CD4-positive, alpha-beta memory T cell (primary cell): ENCODE measurements at regions of chr17 and their contacts with region 1.

Region 1: DNA sequence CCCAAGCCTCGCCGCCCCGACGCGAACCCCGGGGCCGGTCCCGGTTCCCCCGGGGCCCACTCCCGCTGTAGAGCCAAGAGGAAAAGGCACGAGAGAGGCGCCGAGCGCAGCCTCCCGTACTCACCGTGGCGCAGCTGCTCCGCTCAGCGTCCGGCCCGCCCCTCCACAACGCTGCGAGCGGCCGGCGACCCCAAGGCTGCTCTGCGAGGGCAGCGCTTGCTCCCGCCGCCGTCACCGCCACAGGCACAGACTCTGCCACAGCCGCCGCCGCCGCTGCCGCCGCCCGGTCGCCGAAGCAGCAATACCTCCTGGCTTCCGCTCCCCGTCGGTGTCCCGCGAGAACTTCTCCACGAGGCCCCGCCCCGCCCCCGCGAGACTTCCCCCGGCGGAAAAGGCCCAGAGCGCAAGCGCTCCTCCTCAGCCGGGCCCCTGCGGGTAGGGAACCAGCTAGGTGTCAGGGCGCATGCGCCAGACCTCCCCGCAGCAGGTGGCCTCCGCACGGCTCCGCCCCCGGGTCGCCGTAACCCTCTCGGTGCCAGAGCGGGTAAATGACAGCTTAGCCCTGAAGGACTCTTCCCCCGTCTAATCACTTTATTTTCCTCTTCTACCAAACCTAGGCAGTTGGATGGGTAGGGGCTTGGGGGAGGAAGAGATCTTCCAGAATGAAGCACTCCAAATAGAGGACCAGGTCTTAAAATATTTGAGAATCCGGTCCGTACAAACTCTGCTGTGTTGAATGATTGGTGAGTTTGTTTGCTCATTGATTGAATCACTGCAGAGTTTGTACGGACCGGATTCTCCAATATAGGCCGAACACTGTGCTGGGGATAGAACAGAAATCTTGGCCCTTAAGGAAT is at the start of gene GRB2:
- DNase-seq: peak; percentile 99 to 100 (median 100)
- H3K4me3 ChIP-seq: peak within 1 kb of the TSS; percentile 88 to 92
- H3K4me3 Mint-ChIP-seq: peak within 1 kb of the TSS; percentile 96 to 99 (median 97)
- H3K27ac ChIP-seq: peak within 1 kb of the TSS; percentile 89
- H3K27ac Mint-ChIP-seq: peak within 1 kb of the TSS; percentile 91 to 99 (median 96)
- H3K4me1 ChIP-seq: peaks cover 43% of the 10 kb centered on the region
- H3K4me1 Mint-ChIP-seq: peaks cover 25 to 54% (median 37%) of the 10 kb centered on the region in 4 donors
- H3K27me3 ChIP-seq: no peaks in the 10 kb centered on the region
- H3K27me3 Mint-ChIP-seq: no peaks in the 10 kb centered on the region
- total RNA-seq, gene GRB2: 131 to 133 TPM

Region 2: DNA sequence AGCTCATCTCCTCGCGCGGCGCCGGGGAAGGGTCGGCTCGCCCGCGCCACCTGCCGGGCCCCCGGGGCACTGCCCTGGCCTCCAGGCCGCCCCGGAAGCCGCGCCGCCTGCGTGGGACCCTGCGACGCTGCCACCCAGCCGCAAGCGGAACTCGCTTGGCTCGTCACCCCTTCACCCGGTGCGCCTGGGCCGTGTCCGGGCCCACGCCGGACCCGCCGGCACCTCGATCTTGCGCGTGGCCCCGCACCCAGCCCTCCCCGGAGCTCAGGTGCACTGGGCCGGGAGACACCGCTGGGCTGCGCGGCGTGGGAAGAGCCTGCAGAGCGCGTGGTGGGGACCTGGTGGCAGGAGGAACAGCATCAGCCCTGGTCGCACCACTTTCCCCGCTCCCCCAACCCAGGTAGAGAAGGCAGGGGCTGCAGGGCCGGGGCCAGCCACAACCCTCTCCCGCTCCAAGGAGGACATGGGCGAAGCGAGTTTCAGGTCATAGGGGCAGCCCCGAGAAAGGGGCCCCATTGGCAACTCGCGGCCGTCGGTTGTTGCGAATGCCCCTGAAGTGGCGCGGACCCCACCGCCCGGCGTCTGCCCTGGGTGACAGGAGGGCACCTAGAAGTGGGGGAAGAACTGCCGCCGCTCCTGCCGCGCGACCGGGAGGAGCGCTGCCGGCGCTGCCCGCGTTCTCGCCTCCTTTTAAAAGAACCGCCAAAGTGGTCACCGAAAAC is 134.2 kb before region 1 on chr17:
- CTCF ChIA-PET with region 1: interaction called, 3 read pairs
- POLR2A ChIA-PET with region 1: interaction called, 16 read pairs
- intact Hi-C with region 1: no loop called
- DNase-seq: peak; percentile 86 to 94 (median 88)
- H3K4me3 ChIP-seq: peak overlapping the region; percentile 42 to 82
- H3K4me3 Mint-ChIP-seq: peak overlapping the region; percentile 80 to 91 (median 84)
- H3K27ac ChIP-seq: peak overlapping the region; percentile 89
- H3K27ac Mint-ChIP-seq: peak overlapping the region; percentile 25 to 94 (median 88)
- H3K4me1 ChIP-seq: peaks cover 27% of the 10 kb centered on the region
- H3K4me1 Mint-ChIP-seq: peaks cover 10 to 35% (median 22%) of the 10 kb centered on the region in 4 donors
- H3K27me3 ChIP-seq: no peaks in the 10 kb centered on the region
- H3K27me3 Mint-ChIP-seq: no peaks in the 10 kb centered on the region

Region 3: DNA sequence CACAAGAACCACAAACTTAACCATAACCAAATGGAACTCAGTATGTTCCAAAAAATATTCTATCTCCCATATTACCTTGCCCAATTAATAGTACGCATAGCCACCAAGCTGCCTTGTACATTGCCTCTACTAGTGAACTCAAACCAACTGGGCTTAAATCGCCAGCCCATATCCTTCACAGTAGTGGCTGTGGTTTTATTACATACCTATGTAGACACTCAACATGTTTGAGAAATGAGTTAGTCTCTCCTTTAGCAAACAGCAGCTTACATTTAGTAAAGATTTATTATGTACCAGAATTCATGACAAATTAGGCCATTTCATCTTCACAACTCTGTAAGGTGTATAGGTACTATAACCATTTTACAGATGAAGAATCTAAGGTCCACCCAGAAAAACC is 41.5 kb before region 1 on chr17:
- CTCF ChIA-PET with region 1: interaction called, 3 read pairs
- POLR2A ChIA-PET with region 1: interaction called, 3 read pairs
- intact Hi-C with region 1: loop called (anchors 5 kb)
- DNase-seq: no peak
- H3K4me3 ChIP-seq: no peak overlapping the region
- H3K4me3 Mint-ChIP-seq: peak overlapping the region in 5 of 8 donors; percentile 2 to 69 (median 10)
- H3K27ac ChIP-seq: no peak overlapping the region
- H3K27ac Mint-ChIP-seq: peak overlapping the region in 4 of 7 donors; percentile 9 to 76 (median 18)
- H3K4me1 ChIP-seq: peaks cover 92% of the 10 kb centered on the region
- H3K4me1 Mint-ChIP-seq: peaks cover 69 to 96% (median 86%) of the 10 kb centered on the region in 4 donors
- H3K27me3 ChIP-seq: no peaks in the 10 kb centered on the region
- H3K27me3 Mint-ChIP-seq: no peaks in the 10 kb centered on the region

Region 4: GRCh38 chr17:75450270-75450669 is 44.7 kb after region 1 on chr17:
- CTCF ChIA-PET with region 1: no interaction called
- POLR2A ChIA-PET with region 1: no interaction called
- intact Hi-C with region 1: no loop called
- DNase-seq: no peak
- H3K4me3 ChIP-seq: no peak overlapping the region
- H3K4me3 Mint-ChIP-seq: no peak overlapping the region
- H3K27ac ChIP-seq: no peak overlapping the region
- H3K27ac Mint-ChIP-seq: peak overlapping the region in 1 of 7 donors; percentile 73
- H3K4me1 ChIP-seq: no peaks in the 10 kb centered on the region
- H3K4me1 Mint-ChIP-seq: peaks cover 0 to 1% (median 0%) of the 10 kb centered on the region in 4 donors
- H3K27me3 ChIP-seq: no peaks in the 10 kb centered on the region
- H3K27me3 Mint-ChIP-seq: no peaks in the 10 kb centered on the region

Region 5: DNA sequence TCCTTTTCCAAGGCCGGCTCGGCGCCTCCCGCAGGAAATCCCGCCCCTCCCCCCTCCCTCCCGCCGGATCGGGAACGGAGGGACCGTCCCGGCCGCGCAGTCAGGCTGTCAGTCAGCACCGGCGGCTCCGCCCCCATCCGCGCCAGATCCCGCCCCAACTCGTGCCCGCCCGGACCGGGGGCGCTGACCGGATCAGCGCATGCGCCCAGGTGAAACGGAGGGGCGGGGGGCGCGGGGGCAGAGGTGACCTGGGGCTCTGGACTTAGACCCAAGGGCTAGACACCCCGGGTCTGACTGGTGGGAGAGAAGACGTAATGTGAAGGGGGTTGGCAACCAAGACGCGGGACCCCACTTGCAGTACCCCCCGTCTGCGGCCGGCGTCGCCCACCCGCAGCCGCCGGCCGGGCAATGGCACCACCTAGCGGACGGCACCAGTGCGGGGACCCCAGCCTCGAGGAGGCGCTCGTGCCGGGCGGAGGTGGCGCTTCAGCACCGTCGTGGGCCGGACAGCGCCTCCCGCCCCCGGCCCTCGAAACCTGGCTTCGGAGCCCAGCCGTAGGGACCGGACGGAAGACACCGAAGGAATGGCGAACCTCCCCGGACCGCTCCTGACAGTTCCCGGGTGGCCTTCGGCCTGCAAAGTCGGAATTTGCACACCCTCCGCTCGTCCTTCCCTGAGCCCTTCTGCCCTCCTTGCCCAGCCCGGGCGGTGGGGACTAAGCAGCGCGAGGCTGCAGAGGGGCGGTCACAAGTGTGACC is 110.1 kb after region 1 on chr17 and contains the start of gene CASKIN2:
- CTCF ChIA-PET with region 1: interaction called, 6 read pairs
- POLR2A ChIA-PET with region 1: interaction called, 21 read pairs
- intact Hi-C with region 1: loop called (anchors 1 kb)
- DNase-seq: peak; percentile 68 to 74 (median 70)
- H3K4me3 ChIP-seq: peak within 1 kb of the TSS; percentile 69 to 74
- H3K4me3 Mint-ChIP-seq: peak within 1 kb of the TSS; percentile 70 to 84 (median 80)
- H3K27ac ChIP-seq: no peak within 1 kb of the TSS
- H3K27ac Mint-ChIP-seq: peak within 1 kb of the TSS in 6 of 7 donors; percentile 19 to 75 (median 52)
- H3K4me1 ChIP-seq: peaks cover 29% of the 10 kb centered on the region
- H3K4me1 Mint-ChIP-seq: peaks cover 16 to 31% (median 19%) of the 10 kb centered on the region in 4 donors
- H3K27me3 ChIP-seq: no peaks in the 10 kb centered on the region
- H3K27me3 Mint-ChIP-seq: no peaks in the 10 kb centered on the region
- total RNA-seq, gene CASKIN2: 0.32 to 0.53 TPM

Region 6: DNA sequence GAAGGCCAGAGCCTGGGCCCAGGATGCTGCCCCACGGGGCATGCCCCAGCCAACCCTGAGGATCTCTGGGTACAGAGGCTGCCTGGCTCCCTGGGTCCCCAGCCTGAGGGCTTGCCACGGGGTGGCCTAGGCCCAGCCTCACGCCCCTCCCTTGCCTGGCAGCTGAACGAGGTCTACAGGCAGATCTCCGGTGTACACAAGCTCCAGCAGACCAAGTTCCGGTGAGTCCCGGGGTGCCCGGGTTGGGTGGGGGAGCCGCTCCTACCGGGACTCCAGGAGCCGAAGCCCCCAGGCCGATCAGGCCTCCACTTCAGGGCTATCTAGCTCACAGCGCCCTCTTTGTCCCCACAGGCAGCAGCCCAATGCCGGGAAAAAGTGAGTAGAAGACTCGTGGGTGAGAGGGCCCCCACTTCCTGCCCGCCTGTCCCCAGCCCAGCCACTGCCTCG is 335.1 kb after region 1 on chr17:
- CTCF ChIA-PET with region 1: no interaction called
- POLR2A ChIA-PET with region 1: no interaction called
- intact Hi-C with region 1: no loop called
- DNase-seq: no peak
- H3K4me3 ChIP-seq: no peak overlapping the region
- H3K4me3 Mint-ChIP-seq: no peak overlapping the region
- H3K27ac ChIP-seq: no peak overlapping the region
- H3K27ac Mint-ChIP-seq: no peak overlapping the region
- H3K4me1 ChIP-seq: no peaks in the 10 kb centered on the region
- H3K4me1 Mint-ChIP-seq: no peaks in the 10 kb centered on the region
- H3K27me3 ChIP-seq: no peaks in the 10 kb centered on the region
- H3K27me3 Mint-ChIP-seq: no peaks in the 10 kb centered on the region